GM10248 (cell line): ENCODE measurements at regions of chr17 and their contacts with region 1.

Region 1: GRCh38 chr17:74659898-74660297 is 36.4 kb upstream of the CD300E start:
- DNase-seq: no peak
- CTCF ChIP-seq: no peak

Region 2: GRCh38 chr17:74354123-74354522 is 305.8 kb before region 1 on chr17:
- CTCF ChIA-PET with region 1: no interaction called
- POLR2A ChIA-PET with region 1: no interaction called
- DNase-seq: peak; percentile 84
- CTCF ChIP-seq: peak; percentile 79

Region 3: DNA sequence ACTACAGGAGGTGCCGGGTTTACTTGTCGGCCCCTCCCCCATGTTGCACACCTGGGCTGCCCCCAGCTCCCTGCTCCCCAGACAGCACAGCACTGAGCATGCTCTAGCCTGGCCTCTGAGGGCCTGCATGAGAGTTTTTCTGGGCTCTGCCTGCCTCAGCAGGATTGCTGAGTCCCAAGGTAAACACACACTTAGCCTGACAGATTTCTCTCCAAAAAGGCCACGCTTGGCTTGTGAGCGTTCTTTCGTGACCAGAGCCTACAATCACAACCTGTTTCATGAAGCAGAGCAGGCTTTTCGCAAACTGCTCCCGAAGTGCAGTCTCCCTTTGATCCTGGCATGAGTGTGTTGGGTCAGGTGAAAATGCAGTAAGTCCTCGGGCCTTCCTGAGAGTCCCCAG is 26.6 kb before region 1 on chr17:
- CTCF ChIA-PET with region 1: interaction called, 14 read pairs
- POLR2A ChIA-PET with region 1: no interaction called
- DNase-seq: no peak
- CTCF ChIP-seq: no peak

Region 4: DNA sequence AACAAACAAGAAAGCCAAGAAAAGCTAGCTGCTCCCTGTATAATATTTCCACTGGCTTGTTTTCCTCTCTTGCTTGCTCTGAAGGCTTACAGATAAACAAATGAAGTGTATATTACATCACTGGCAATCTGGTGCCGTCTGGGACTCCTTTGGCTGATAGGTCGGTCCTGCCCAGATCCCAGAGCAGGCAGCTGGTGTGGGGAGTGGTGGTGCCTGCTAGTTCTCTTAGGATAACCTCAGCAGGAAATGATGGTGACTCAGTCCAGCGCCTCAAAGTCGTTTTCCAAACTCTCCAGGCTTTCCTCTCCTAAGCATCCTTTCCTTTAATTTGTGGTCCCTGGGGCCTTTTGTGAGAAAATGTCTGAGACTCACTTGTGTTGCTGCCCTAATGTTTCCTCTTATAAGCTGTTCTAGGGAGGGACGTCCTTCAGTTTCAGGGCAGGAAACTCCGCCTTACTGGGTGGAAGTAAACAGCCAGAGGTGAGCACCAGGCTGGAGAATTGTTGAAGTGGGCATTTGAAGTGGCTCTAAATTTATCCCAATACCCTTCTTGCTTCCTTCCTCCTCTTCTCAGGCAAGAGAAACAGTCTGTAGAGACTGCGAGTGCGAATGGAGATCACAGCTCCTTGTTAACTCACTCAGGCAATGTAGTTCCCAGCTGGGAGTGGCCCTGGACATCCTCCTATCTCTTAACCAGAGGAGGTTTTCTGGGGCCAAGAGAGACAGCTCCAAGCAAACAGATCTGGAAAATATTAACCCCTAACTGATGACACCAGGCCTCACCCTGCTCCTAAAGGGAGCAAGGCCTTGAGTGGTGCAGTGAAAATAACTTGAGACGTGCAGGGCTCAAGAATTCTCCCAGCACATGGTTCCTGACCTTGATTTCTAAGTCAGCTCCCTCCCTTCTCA is 17.9 kb after region 1 on chr17:
- CTCF ChIA-PET with region 1: interaction called, 46 read pairs
- POLR2A ChIA-PET with region 1: no interaction called
- DNase-seq: no peak
- CTCF ChIP-seq: no peak

Region 5: DNA sequence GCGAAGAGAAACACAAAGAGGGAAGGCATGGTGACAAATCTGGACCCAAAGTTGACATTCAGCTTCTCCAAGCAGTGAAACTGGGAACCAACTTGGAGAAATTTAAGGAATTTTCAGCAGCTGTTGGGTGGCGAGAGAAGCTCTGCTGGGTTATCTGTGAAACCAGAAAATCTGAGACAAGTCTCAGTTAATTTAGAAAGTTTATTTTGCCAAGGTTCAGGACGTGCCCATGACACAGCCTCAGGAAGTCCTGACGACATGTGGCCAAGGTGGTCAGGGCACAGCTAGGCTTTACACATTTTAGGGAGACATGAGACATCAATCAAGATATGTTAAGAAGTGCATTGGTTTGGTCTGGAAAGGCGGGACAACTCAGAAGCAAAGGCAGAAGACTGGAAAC is 64.0 kb after region 1 on chr17:
- CTCF ChIA-PET with region 1: interaction called, 14 read pairs
- POLR2A ChIA-PET with region 1: no interaction called
- DNase-seq: no peak
- CTCF ChIP-seq: no peak

Region 6: DNA sequence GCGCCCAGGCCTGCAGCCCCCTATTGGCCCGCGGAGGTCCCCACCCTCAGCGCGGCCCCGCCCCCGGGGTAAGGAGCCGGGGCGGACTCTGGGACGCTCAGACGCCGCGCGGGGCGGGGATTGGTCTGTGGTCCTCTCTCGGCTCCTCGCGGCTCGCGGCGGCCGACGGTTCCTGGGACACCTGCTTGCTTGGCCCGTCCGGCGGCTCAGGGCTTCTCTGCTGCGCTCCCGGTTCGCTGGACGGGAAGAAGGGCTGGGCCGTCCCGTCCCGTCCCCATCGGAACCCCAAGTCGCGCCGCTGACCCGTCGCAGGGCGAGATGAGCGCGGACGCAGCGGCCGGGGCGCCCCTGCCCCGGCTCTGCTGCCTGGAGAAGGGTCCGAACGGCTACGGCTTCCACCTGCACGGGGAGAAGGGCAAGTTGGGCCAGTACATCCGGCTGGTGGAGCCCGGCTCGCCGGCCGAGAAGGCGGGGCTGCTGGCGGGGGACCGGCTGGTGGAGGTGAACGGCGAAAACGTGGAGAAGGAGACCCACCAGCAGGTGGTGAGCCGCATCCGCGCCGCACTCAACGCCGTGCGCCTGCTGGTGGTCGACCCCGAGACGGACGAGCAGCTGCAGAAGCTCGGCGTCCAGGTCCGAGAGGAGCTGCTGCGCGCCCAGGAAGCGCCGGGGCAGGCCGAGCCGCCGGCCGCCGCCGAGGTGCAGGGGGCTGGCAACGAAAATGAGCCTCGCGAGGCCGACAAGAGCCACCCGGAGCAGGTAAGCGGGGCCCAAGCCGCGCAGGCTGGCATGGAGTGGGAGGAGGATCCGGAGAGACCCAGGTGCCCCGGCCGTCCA is 88.8 kb after region 1 on chr17 and contains the start of gene NHERF1:
- CTCF ChIA-PET with region 1: interaction called, 31 read pairs
- POLR2A ChIA-PET with region 1: no interaction called
- DNase-seq: peak; percentile 99
- CTCF ChIP-seq: peak; percentile 19

Region 7: GRCh38 chr17:74776044-74776977 is 116.4 kb after region 1 on chr17 and contains the start of gene NAT9:
- CTCF ChIA-PET with region 1: interaction called, 69 read pairs
- POLR2A ChIA-PET with region 1: no interaction called
- DNase-seq: peak; percentile 100
- CTCF ChIP-seq: no peak